Right lobe of liver (tissue), 6 donors: ENCODE measurements at regions of chr22 and their contacts with region 1.

Region 1: DNA sequence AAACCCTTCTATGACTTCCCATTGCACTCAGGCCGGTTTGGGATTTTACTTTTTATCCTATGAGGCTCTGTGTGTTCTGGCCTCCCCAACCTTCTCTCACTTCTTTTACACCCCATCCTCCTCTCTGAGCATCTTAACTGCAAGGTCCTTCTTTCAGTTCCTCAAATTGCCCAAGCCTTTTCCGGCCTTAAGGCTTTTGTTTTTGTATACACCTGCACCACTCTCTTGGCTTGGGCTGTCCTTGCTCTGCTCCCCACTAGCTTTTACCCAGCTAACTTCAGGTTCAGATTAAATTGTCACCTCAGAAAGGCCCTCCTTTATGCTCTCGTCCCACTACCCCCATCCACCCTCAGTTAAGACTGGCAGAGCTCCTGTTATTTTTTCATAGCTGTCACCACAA is 55.5 kb downstream of the FAM83F start:
- DNase-seq: peak in 1 of 3 donors; percentile 23
- ATAC-seq: no peak
- H3K4me3 ChIP-seq: no peak overlapping the region
- H3K27ac ChIP-seq: no peak overlapping the region
- H3K4me1 ChIP-seq: peaks cover 0 to 9% (median 5%) of the 10 kb centered on the region in 4 donors
- H3K27me3 ChIP-seq: no peaks in the 10 kb centered on the region
- CTCF ChIP-seq: no peak
- POLR2A ChIP-seq: no peak

Region 2: GRCh38 chr22:40113696-40114095 is 63.4 kb after region 1 on chr22:
- intact Hi-C with region 1: loop called in 1 of 2 experiments (anchors 5 kb)
- DNase-seq: no peak
- ATAC-seq: no peak
- H3K4me3 ChIP-seq: no peak overlapping the region
- H3K27ac ChIP-seq: no peak overlapping the region
- H3K4me1 ChIP-seq: peaks cover 0 to 4% (median 0%) of the 10 kb centered on the region in 4 donors
- H3K27me3 ChIP-seq: no peaks in the 10 kb centered on the region
- CTCF ChIP-seq: no peak
- POLR2A ChIP-seq: no peak